Activated CD4-positive, alpha-beta memory T cell treated with anti-CD3 and anti-CD28 coated beads for 36 hours (primary cell): ENCODE measurements at regions of chr21 and their contacts with region 1.

Region 1: DNA sequence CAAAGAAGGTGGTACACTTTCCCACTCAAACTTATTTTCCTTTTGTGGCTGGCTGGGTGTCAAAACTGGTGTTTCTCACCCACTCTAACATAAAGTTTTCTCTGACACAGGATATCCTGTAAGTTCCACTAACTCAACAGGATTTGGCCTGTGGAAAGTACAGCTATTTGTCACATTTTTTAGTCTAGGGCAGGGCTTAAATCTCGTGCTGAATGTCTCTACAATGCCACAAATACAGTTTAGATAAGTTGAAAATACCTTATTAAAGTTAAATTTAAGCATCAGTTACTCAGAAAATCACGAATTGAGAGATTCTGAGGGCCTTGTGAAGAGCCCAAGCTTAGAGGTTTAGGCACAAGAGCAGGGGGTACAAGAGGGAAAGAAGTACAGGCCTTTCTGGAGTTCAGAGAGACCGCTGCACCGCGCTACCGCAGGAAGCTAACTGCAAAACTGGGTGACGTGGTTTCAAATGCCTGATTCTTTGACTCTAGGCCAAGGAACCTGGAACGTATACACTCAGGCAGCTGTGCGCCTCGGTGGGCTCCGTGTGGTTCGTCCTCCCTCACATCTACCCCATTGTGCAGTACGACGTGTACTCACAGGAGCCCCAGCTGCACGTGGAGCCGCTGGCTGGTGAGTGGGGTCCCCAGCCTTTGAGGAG is 23.4 kb upstream of the PWP2 start:
- DNase-seq: peak; percentile 83
- H3K4me3 Mint-ChIP-seq: peak overlapping the region; percentile 70
- H3K27ac Mint-ChIP-seq: peak overlapping the region; percentile 99
- H3K4me1 Mint-ChIP-seq: peaks cover 89% of the 10 kb centered on the region
- H3K27me3 Mint-ChIP-seq: no peaks in the 10 kb centered on the region

Region 2: GRCh38 chr21:44011980-44012527 is 71.7 kb before region 1 on chr21 and contains the start of gene TRAPPC10:
- CTCF ChIA-PET with region 1: interaction called, 20 read pairs
- POLR2A ChIA-PET with region 1: interaction called, 31 read pairs
- intact Hi-C with region 1: no loop called
- DNase-seq: peak; percentile 88
- H3K4me3 Mint-ChIP-seq: peak within 1 kb of the TSS; percentile 91
- H3K27ac Mint-ChIP-seq: peak within 1 kb of the TSS; percentile 94
- H3K4me1 Mint-ChIP-seq: peaks cover 38% of the 10 kb centered on the region
- H3K27me3 Mint-ChIP-seq: no peaks in the 10 kb centered on the region
- total RNA-seq, gene TRAPPC10: 46.1 to 50.5 TPM

Region 3: GRCh38 chr21:44024887-44025362 is 58.8 kb before region 1 on chr21:
- CTCF ChIA-PET with region 1: no interaction called
- POLR2A ChIA-PET with region 1: interaction called, 4 read pairs
- intact Hi-C with region 1: loop called (anchors 2 kb)
- DNase-seq: no peak
- H3K4me3 Mint-ChIP-seq: no peak overlapping the region
- H3K27ac Mint-ChIP-seq: peak overlapping the region; percentile 82
- H3K4me1 Mint-ChIP-seq: peaks cover 80% of the 10 kb centered on the region
- H3K27me3 Mint-ChIP-seq: no peaks in the 10 kb centered on the region

Region 4: DNA sequence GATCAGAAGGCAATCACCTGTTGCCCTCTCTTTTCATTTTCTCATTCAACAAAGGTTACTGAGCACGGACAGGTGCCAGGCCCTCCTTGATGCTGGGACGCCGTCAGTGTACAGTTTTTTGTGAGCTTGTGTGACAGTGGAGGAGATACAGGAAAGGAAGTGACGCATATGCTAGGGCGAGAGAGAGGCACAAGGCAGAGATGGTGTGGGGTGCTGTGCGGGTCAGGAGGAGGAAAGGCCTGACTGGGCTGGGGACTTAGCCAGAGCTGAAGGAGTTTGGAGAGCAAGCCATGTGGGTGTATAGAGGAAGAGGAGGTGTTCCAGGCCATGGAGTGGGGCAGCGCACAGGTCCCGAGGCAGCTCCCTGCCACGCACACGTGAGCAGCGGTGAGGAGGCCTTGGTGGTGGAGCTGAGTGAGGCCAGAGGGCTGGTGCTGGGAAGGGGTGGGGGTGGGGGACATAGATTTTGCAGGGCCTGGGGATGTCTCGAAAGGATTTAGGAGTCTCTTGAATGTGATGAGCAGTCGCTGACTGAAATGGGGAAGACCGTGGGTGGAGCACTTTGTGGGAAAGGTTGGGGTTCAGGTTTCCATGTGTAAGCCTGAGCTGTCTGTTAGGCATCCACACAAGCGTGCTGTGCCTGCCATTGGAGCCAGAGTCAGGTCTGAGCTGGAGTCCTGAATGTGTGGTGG is 25.7 kb before region 1 on chr21:
- CTCF ChIA-PET with region 1: no interaction called
- POLR2A ChIA-PET with region 1: interaction called, 20 read pairs
- intact Hi-C with region 1: no loop called
- DNase-seq: peak; percentile 83
- H3K4me3 Mint-ChIP-seq: peak overlapping the region; percentile 78
- H3K27ac Mint-ChIP-seq: peak overlapping the region; percentile 94
- H3K4me1 Mint-ChIP-seq: peaks cover 48% of the 10 kb centered on the region
- H3K27me3 Mint-ChIP-seq: no peaks in the 10 kb centered on the region

Region 5: DNA sequence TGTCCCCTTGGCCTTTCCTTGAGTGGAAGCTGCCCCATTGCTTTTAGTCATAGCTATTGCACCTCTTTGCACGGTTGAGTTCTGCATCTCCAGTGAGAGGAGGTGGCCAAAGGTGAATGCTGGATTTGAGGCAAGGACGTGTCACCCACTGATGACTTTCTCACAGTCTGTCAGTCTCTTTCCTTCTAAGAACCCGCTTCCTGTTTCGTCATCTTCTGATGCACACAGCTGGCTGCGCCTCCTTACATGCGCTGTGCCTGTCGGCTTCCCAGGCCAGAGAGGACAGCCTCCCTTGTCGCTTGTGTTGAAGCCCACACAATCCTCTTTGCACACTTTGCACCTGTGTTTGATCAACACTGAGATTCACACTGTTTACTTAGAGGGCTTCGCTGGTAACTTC is 18.3 kb before region 1 on chr21:
- CTCF ChIA-PET with region 1: interaction called, 5 read pairs
- POLR2A ChIA-PET with region 1: interaction called, 11 read pairs
- intact Hi-C with region 1: loop called (anchors 1 kb)
- DNase-seq: peak; percentile 85
- H3K4me3 Mint-ChIP-seq: peak overlapping the region; percentile 48
- H3K27ac Mint-ChIP-seq: peak overlapping the region; percentile 84
- H3K4me1 Mint-ChIP-seq: peaks cover 33% of the 10 kb centered on the region
- H3K27me3 Mint-ChIP-seq: no peaks in the 10 kb centered on the region